ENCODE measurements at regions of chr2 and their contacts with region 1.

Region 1: GRCh38 chr2:113762377-113763118 is 6.1 kb upstream of the SLC35F5 start:
- DNase-seq: no peak
- ATAC-seq: peak in 1 of 8 donors; percentile 38
- H3K4me3 ChIP-seq: no peak overlapping the region
- H3K27ac ChIP-seq: peak overlapping the region in 2 of 10 donors; percentile 20 to 48
- H3K4me1 ChIP-seq: peaks cover 0 to 19% (median 1%) of the 10 kb centered on the region in 9 donors
- H3K27me3 ChIP-seq: no peaks in the 10 kb centered on the region
- CTCF ChIP-seq: no peak

Region 2: GRCh38 chr2:113806217-113806930 is 43.8 kb after region 1 on chr2:
- intact Hi-C with region 1: no loop called
- DNase-seq: no peak
- ATAC-seq: no peak
- H3K4me3 ChIP-seq: no peak overlapping the region
- H3K27ac ChIP-seq: no peak overlapping the region
- H3K4me1 ChIP-seq: no peaks in the 10 kb centered on the region
- H3K27me3 ChIP-seq: no peaks in the 10 kb centered on the region
- CTCF ChIP-seq: no peak

Region 3: DNA sequence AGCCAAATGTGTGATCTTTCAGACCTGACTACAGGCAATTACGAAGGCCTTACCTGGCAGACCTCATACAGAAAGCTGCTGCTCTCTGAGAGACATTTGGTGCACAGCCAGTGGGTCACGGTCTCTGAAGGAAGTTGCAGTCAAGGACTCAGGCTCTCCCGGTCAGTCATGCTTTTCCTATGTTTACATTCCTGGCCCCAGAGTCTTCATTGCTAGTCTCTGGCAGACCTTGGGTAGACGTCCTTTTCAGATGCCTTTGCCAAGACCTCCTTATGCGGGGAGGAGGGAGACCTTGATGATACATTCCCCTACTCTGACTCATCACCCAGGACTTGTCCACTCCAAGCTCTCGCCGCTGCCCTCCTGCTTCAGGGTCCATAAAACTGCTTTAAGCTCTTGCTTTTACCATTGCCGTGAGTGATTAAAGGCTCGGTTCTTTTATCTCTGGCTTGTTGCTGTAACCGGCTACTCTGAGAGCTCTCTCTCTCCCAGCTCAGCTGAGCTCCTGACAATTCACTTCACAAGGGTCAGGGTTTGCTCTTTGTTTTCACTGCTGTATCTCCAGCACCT is 55.9 kb after region 1 on chr2:
- intact Hi-C with region 1: loop called in 1 of 10 experiments (anchors 5 kb)
- DNase-seq: peak in 1 of 2 donors; percentile 33
- ATAC-seq: peak; percentile 72 to 97 (median 90)
- H3K4me3 ChIP-seq: peak overlapping the region in 7 of 10 donors; percentile 2 to 40 (median 28)
- H3K27ac ChIP-seq: peak overlapping the region; percentile 20 to 85 (median 69)
- H3K4me1 ChIP-seq: peaks cover 0 to 15% (median 6%) of the 10 kb centered on the region in 9 donors
- H3K27me3 ChIP-seq: no peaks in the 10 kb centered on the region
- CTCF ChIP-seq: no peak

Measured in heart right ventricle (tissue), 16 donors.